ENCODE measurements at regions of chr2 and their contacts with region 1.

Region 1: GRCh38 chr2:203484266-203485112 is 50.6 kb downstream of the RAPH1 start:
- DNase-seq: peak in 2 of 4 experiments; percentile 3 to 11
- ATAC-seq: peak; percentile 75; the same call in 2 of the 3 replicates
- H3K4me3 ChIP-seq: no peak overlapping the region
- H3K27ac ChIP-seq: no peak overlapping the region
- H3K4me1 ChIP-seq: no peaks in the 10 kb centered on the region
- H3K27me3 ChIP-seq: no peaks in the 10 kb centered on the region
- CTCF ChIP-seq: peak in 2 of 3 experiments; percentile 36 to 49; a peak in 2 of 6 replicates
- EP300 ChIP-seq: no peak
- POLR2A ChIP-seq: no peak
- RAD21 ChIP-seq: peak; percentile 46 to 67

Region 2: GRCh38 chr2:203383038-203383437 is 101.5 kb before region 1 on chr2:
- CTCF ChIA-PET with region 1: no interaction called
- POLR2A ChIA-PET with region 1: no interaction called
- in situ Hi-C with region 1: no loop called
- intact Hi-C with region 1: no loop called
- DNase-seq: no peak
- ATAC-seq: no peak
- H3K4me3 ChIP-seq: no peak overlapping the region
- H3K27ac ChIP-seq: no peak overlapping the region
- H3K4me1 ChIP-seq: no peaks in the 10 kb centered on the region
- H3K27me3 ChIP-seq: no peaks in the 10 kb centered on the region
- CTCF ChIP-seq: no peak
- EP300 ChIP-seq: no peak
- POLR2A ChIP-seq: no peak
- RAD21 ChIP-seq: no peak

Region 3: DNA sequence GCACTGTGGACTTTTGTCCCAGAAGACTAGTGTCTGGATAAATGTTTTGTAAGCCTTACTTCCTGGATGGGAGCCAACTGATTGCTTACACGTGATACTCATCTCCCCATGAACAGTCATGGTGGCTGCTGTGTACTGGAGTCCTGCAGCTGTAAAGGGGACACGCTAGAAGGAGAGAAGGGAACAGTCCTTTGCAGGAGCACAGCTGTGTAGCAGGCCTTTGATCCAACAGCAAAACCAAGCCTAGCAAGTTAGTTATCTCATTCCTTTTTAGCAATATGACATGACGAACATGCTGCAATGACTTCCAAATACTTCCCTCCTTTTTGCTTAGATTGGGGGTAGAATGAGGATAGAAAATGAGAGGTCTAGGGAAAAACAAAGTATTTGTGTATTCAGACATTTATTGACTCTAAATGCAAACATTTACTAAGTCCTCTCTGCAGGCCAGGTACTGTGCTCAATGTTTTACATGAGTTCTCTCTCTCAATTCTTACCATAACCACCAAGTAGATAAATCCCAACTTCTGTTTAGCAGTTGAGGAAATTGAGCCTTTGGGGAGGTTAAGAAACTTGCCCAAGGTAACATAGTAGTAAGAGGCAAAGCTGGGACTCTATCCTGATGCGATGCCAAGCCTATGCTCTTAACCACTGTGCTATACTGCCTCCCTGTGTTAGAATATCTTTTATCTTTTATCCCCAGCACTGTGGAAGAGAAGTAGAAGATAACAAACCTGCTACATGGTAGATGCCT is 166.5 kb after region 1 on chr2:
- CTCF ChIA-PET with region 1: no interaction called
- POLR2A ChIA-PET with region 1: no interaction called
- in situ Hi-C with region 1: no loop called
- intact Hi-C with region 1: loop called (anchors 1 kb)
- DNase-seq: peak in 2 of 4 experiments; percentile 8 to 26
- ATAC-seq: peak; percentile 34; the same call in 1 of the 3 replicates
- H3K4me3 ChIP-seq: no peak overlapping the region
- H3K27ac ChIP-seq: no peak overlapping the region
- H3K4me1 ChIP-seq: no peaks in the 10 kb centered on the region
- H3K27me3 ChIP-seq: peaks cover 0 to 14% of the 10 kb centered on the region in 2 experiments; a peak in 2 of 5 replicates
- CTCF ChIP-seq: 0 out of 6 replicates have a peak, but pooled peaks of 1 of the 3 experiments have one; percentile 5
- EP300 ChIP-seq: no peak
- POLR2A ChIP-seq: no peak
- RAD21 ChIP-seq: peak; percentile 29 to 53

Region 4: DNA sequence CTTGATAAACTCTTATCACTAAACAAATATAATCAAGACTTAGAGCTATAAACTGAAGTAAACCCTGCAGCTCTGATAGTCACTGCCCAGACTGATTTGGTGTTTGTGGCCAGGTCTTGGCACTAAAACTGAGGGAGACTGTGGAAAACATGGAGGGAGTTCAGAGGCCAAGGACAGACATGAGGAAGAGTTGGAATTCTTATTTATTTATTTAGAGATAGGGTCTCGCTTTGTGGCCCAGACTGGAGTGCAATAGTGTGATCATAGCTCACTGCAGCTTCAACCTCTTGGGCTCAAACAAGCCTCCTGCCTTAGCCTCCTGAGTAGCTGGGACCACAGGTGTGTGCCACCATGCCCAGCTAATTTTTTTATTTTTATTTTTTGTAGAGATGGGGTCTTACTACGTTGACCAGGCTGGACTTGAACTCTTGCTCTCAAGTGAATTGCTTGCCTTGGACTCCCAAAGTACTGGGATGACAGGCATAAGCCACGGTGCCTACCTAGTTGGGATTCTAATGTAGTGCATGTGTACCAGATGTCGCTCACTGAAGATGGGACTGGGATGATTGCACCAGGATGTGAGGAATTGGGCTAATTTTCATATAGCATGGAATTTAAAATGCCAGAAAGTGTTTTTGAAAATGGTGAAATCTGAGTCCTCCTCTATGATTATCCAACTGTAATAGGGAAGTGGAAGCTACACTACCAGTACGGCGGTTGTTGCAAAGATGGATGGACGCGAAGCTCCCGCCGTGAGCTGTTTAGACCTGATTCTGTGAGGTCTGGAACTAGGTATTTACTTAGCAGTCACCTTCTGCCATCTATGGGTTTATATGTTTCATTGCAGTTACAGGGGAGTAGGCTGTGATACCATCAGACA is 330.4 kb after region 1 on chr2:
- CTCF ChIA-PET with region 1: no interaction called
- POLR2A ChIA-PET with region 1: no interaction called
- in situ Hi-C with region 1: no loop called
- intact Hi-C with region 1: loop called (anchors 1 kb)
- DNase-seq: peak; percentile 35 to 48 (median 36)
- ATAC-seq: peak; percentile 83
- H3K4me3 ChIP-seq: no peak overlapping the region
- H3K27ac ChIP-seq: no peak overlapping the region
- H3K4me1 ChIP-seq: no peaks in the 10 kb centered on the region
- H3K27me3 ChIP-seq: peaks cover 0 to 4% of the 10 kb centered on the region in 2 experiments; a peak in 2 of 5 replicates
- CTCF ChIP-seq: peak; percentile 24 to 64 (median 57); a peak in 5 of 6 replicates
- EP300 ChIP-seq: no peak
- POLR2A ChIP-seq: no peak
- RAD21 ChIP-seq: peak; percentile 62 to 72

Region 5: GRCh38 chr2:203909261-203909967 is 424.9 kb after region 1 on chr2:
- CTCF ChIA-PET with region 1: no interaction called
- POLR2A ChIA-PET with region 1: no interaction called
- in situ Hi-C with region 1: no loop called
- intact Hi-C with region 1: loop called (anchors 5 kb)
- DNase-seq: peak in 3 of 4 experiments; percentile 7 to 13 (median 7)
- ATAC-seq: peak; percentile 49; the same call in 1 of the 3 replicates
- H3K4me3 ChIP-seq: no peak overlapping the region
- H3K27ac ChIP-seq: no peak overlapping the region
- H3K4me1 ChIP-seq: no peaks in the 10 kb centered on the region
- H3K27me3 ChIP-seq: no peaks in the 10 kb centered on the region; a peak in 1 of 5 replicates
- CTCF ChIP-seq: peak; percentile 22 to 54 (median 45); a peak in 4 of 6 replicates
- EP300 ChIP-seq: no peak
- POLR2A ChIP-seq: no peak
- RAD21 ChIP-seq: peak; percentile 33 to 59

Measured in K562 (cell line).